ENCODE measurements at regions of chr3 and their contacts with region 1.

Region 1: DNA sequence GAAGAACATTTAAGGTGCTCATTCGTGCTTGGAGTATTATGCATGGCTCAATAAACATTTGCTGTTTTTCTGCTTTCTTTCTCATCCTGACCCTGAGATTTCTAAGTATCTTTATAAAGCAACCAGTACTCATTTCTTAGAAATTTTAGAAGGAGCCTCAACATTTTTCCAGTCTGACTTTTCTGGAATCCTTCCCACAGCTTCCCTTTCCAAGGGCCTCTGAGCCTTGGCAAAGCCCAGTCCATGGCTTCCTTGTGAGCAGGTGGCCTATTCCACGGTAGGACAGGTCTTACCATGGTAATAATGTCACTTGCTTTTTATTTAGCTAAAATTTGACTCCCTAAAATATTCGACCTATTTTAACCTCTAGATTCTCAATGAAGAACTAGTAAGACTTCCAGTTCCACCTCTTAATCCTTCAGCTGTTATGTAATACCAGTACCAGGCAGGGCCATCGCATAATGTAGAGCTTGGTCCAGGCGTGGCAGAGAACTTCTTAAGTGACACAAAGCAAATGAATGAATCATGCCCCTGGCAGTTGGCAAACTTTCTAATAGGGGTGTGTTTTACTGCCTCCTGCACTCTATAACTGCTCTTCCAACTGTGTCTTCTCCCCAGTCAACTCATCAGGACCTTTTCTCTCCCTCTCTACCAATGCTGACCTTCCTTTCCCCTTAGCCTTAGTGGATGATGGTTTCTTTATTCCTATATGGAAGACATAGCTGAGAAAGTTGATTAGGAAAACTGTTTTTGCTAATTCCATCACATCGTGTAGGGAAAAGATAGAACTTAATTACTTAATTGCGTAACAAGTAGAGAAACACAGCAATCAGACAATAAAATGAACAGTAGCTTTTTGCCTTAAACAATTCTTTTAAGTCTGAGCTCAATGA is 894 bp upstream of the TM4SF4 start:
- DNase-seq: peak; percentile 42 to 78
- ATAC-seq: peak; percentile 92 to 96 (median 95)
- H3K4me3 ChIP-seq: no peak overlapping the region
- H3K27ac ChIP-seq: peak overlapping the region; percentile 71
- H3K4me1 ChIP-seq: peaks cover 30% of the 10 kb centered on the region
- H3K27me3 ChIP-seq: no peaks in the 10 kb centered on the region
- CTCF ChIP-seq: no peak

Region 2: GRCh38 chr3:149299938-149300791 is 173.4 kb before region 1 on chr3:
- intact Hi-C with region 1: loop called in 1 of 2 experiments (anchors 10 kb)
- DNase-seq: peak in 1 of 2 donors; percentile 28
- ATAC-seq: peak; percentile 78 to 88 (median 86)
- H3K4me3 ChIP-seq: no peak overlapping the region
- H3K27ac ChIP-seq: peak overlapping the region; percentile 75
- H3K4me1 ChIP-seq: peaks cover 37% of the 10 kb centered on the region
- H3K27me3 ChIP-seq: no peaks in the 10 kb centered on the region
- CTCF ChIP-seq: no peak

Region 3: DNA sequence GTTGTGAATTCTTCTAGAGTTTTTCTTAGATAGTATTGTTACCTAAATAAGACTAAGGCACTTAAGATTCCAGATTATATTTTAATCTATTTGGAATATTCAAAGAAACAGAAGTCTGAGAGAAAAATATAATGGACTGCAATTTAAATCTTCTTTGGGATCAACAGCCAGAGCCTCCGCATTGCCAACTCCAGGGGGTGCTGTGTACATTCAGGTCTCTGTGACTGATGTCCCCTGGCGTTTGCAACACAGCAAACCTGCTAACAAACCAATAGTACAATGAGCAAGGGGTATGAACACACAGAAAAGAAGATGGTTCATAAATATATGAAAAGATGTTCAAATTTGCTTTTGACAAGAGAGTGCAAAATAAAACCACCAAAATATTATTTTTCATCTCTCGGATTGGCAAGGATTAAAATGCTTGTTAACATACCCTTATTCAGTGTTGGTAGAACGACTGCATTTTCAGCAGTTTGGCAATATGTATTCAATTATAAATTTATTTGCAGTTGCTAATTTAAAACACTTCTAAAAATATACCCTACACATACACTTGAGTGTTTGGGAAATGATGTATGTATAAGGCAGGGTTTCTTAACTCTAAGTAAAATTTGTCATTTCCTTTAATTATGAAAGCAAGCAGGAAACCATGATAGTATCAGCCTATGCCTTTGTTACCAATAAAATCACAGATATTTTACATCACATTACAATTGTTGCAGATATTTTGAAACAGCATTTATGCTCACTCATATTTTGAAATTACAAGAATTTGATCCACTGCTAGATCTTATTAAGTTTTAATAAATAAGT is 80.0 kb before region 1 on chr3:
- intact Hi-C with region 1: loop called in 1 of 2 experiments (anchors 2 kb)
- DNase-seq: peak; percentile 53 to 74
- ATAC-seq: peak; percentile 79 to 92 (median 86)
- H3K4me3 ChIP-seq: no peak overlapping the region
- H3K27ac ChIP-seq: no peak overlapping the region
- H3K4me1 ChIP-seq: peaks cover 5% of the 10 kb centered on the region
- H3K27me3 ChIP-seq: no peaks in the 10 kb centered on the region
- CTCF ChIP-seq: peak; percentile 90

Measured in psoas muscle (tissue), 8 donors.